ENCODE measurements at regions of chr1 and their contacts with region 1.

Region 1: GRCh38 chr1:248686815-248687214 is 15.8 kb downstream of the OR14I1 start:
- DNase-seq: peak; percentile 6
- H3K4me3 ChIP-seq: no peak overlapping the region
- H3K27ac ChIP-seq: no peak overlapping the region
- H3K4me1 ChIP-seq: no peaks in the 10 kb centered on the region
- CTCF ChIP-seq: peak; percentile 60

Region 2: GRCh38 chr1:248622570-248623001 is 64.2 kb before region 1 on chr1:
- CTCF ChIA-PET with region 1: no interaction called
- POLR2A ChIA-PET with region 1: no interaction called
- intact Hi-C with region 1: loop called (anchors 5 kb)
- DNase-seq: peak; percentile 62
- H3K4me3 ChIP-seq: no peak overlapping the region
- H3K27ac ChIP-seq: no peak overlapping the region
- H3K4me1 ChIP-seq: no peaks in the 10 kb centered on the region
- CTCF ChIP-seq: peak; percentile 83

Region 3: DNA sequence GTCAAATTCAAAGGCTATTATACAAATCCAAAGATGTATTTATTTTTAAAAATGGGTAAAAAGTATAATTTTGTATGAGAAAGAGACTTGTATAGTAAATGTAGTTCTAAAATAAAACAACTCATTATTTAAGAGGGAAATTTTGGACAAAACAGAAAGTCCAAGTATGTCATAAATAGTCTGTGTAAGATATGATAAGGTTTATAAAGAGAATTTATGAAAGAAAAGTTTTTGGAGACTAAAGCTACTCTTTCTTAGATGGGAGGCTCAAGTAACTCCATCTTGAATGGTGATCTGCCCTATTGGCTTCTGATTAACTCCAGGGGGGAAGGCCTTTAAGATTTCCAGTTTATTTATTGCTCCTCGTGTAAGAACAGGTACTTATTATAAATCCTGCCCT is 16.8 kb before region 1 on chr1:
- CTCF ChIA-PET with region 1: no interaction called
- POLR2A ChIA-PET with region 1: no interaction called
- intact Hi-C with region 1: no loop called
- DNase-seq: peak; percentile 15
- H3K4me3 ChIP-seq: no peak overlapping the region
- H3K27ac ChIP-seq: no peak overlapping the region
- H3K4me1 ChIP-seq: no peaks in the 10 kb centered on the region
- CTCF ChIP-seq: no peak

Region 4: DNA sequence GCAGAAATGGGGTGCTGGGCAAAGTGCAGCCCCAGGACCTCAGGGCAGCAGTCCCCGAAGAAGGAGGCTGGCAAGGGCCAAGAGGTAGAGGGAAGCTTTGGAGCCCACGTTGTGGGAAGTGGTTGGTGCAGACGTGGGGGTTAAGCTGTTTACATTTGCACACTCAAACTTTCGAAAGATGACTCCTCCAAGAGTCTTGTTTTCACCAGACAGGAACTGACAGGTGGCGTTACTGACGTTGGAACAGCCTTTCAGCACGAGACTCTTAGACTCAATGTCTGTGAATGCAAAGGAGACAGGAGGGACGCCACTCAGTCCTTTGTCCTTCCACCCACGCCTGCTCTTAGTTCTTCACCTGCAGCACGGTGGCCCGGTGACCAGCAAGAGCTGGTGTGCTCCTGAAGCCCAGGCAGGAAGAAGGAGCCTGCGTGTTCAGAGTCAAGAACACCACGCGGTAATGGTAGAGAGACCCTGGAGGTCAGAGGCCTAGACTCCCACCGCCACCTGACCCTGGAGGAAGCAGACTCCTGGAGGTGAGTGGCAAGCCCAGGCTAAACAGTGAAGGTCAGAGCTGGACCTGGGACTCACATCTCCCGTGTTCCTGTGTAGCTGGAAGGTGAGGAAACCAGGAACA is 52.9 kb after region 1 on chr1:
- CTCF ChIA-PET with region 1: no interaction called
- POLR2A ChIA-PET with region 1: no interaction called
- intact Hi-C with region 1: loop called (anchors 10 kb)
- DNase-seq: peak; percentile 29
- H3K4me3 ChIP-seq: no peak overlapping the region
- H3K27ac ChIP-seq: no peak overlapping the region
- H3K4me1 ChIP-seq: no peaks in the 10 kb centered on the region
- CTCF ChIP-seq: no peak